CD4-positive, alpha-beta memory T cell (primary cell): ENCODE measurements at regions of chr19 and their contacts with region 1.

Region 1: GRCh38 chr19:588093-588740 is 1.5 kb upstream of the HCN2 start:
- DNase-seq: peak; percentile 57 to 81 (median 62)
- H3K4me3 ChIP-seq: no peak overlapping the region
- H3K4me3 Mint-ChIP-seq: peak overlapping the region in 4 of 8 donors; percentile 42 to 65 (median 52)
- H3K27ac ChIP-seq: no peak overlapping the region
- H3K27ac Mint-ChIP-seq: peak overlapping the region in 1 of 7 donors; percentile 59
- H3K4me1 ChIP-seq: peaks cover 19% of the 10 kb centered on the region
- H3K4me1 Mint-ChIP-seq: peaks cover 3 to 14% (median 6%) of the 10 kb centered on the region in 4 donors
- H3K27me3 ChIP-seq: peaks cover 6% of the 10 kb centered on the region
- H3K27me3 Mint-ChIP-seq: peaks cover 6 to 7% of the 10 kb centered on the region in 2 donors

Region 2: DNA sequence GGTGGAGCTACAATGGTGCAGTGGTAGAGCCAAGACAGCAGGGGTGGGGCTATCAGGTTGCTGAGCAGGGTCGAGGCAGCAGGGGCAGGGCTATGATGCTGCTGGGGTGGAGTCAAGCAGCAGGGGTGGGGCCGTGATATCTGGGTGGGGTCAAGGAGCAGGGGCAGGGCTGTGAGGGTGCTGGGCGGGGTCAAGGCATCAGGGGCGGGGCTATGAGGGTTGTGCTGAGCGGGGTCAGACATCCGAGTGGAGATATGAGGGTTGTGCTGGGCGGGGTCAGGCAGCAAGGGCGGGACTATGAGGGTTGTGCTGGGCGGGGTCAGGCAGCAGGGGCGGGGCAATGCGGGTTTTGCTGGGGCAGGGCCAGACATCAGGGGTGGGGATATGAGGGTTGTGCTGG is 16.1 kb after region 1 on chr19:
- CTCF ChIA-PET with region 1: no interaction called
- POLR2A ChIA-PET with region 1: no interaction called
- intact Hi-C with region 1: no loop called
- DNase-seq: peak in 2 of 5 donors; percentile 24 to 52
- H3K4me3 ChIP-seq: no peak overlapping the region
- H3K4me3 Mint-ChIP-seq: no peak overlapping the region
- H3K27ac ChIP-seq: no peak overlapping the region
- H3K27ac Mint-ChIP-seq: no peak overlapping the region
- H3K4me1 ChIP-seq: peaks cover 3% of the 10 kb centered on the region
- H3K4me1 Mint-ChIP-seq: peaks cover 0 to under 1% (median 0%) of the 10 kb centered on the region in 4 donors
- H3K27me3 ChIP-seq: no peaks in the 10 kb centered on the region
- H3K27me3 Mint-ChIP-seq: no peaks in the 10 kb centered on the region

Region 3: GRCh38 chr19:617473-618246 is 29.4 kb after region 1 on chr19:
- CTCF ChIA-PET with region 1: no interaction called
- POLR2A ChIA-PET with region 1: no interaction called
- intact Hi-C with region 1: no loop called
- DNase-seq: no peak
- H3K4me3 ChIP-seq: no peak overlapping the region
- H3K4me3 Mint-ChIP-seq: no peak overlapping the region
- H3K27ac ChIP-seq: no peak overlapping the region
- H3K27ac Mint-ChIP-seq: no peak overlapping the region
- H3K4me1 ChIP-seq: no peaks in the 10 kb centered on the region
- H3K4me1 Mint-ChIP-seq: peaks cover 2 to 14% (median 10%) of the 10 kb centered on the region in 4 donors
- H3K27me3 ChIP-seq: no peaks in the 10 kb centered on the region
- H3K27me3 Mint-ChIP-seq: peaks cover 0 to 2% of the 10 kb centered on the region in 2 donors

Region 4: DNA sequence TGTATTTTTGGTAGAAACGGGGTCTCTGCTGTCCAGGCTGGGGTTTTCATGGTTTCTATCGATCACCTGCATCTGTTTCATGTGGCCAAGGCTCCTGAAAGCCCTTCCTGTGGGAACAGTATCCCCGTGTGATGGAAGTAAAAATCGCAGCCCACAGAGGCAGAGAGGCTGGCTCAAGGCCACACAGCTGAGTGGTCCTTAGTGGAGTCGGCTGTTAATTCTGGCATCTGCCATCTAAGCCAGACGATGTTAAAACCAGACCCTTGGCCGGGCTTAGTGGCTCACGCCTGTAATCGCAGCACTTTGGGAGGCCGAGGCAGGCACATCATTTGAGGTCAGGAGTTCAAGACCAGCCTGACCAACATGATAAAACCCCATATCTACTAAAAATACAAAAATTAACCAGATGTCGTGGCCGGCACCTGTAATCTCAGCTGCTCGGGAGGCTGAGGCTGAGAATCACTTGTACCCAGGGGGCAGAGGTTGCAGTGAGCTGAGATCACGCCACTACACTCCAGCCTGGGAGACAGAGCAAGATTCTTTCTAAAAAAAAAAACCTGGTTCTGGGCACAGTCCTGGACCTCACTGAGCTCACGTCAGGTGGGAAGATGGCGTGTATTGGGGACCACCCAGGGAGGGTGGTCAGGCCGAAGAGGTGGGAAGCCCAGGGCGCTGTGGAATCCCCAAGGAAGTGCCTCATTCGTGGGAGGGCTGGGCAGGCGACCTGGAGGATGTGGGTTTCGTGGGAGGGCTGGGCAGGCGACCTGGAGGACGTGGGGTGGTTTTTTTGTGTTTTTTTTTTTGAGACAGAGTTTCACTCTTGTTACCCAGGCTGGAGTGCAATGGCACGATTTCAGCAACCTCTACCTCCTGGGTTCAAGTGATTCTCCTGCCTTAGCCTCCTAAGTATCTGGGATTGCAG is 144.2 kb after region 1 on chr19:
- CTCF ChIA-PET with region 1: interaction called, 26 read pairs
- POLR2A ChIA-PET with region 1: no interaction called
- intact Hi-C with region 1: loop called (anchors 1 kb)
- DNase-seq: no peak
- H3K4me3 ChIP-seq: no peak overlapping the region
- H3K4me3 Mint-ChIP-seq: no peak overlapping the region
- H3K27ac ChIP-seq: no peak overlapping the region
- H3K27ac Mint-ChIP-seq: peak overlapping the region in 2 of 7 donors; percentile 15 to 59
- H3K4me1 ChIP-seq: no peaks in the 10 kb centered on the region
- H3K4me1 Mint-ChIP-seq: peaks cover 7 to 18% (median 10%) of the 10 kb centered on the region in 4 donors
- H3K27me3 ChIP-seq: no peaks in the 10 kb centered on the region
- H3K27me3 Mint-ChIP-seq: peaks cover 0 to 2% of the 10 kb centered on the region in 2 donors